Activated naive CD4-positive, alpha-beta T cell treated with anti-CD3 and anti-CD28 coated beads for 36 hours (primary cell): ENCODE measurements at regions of chr1 and their contacts with region 1.

Region 1: DNA sequence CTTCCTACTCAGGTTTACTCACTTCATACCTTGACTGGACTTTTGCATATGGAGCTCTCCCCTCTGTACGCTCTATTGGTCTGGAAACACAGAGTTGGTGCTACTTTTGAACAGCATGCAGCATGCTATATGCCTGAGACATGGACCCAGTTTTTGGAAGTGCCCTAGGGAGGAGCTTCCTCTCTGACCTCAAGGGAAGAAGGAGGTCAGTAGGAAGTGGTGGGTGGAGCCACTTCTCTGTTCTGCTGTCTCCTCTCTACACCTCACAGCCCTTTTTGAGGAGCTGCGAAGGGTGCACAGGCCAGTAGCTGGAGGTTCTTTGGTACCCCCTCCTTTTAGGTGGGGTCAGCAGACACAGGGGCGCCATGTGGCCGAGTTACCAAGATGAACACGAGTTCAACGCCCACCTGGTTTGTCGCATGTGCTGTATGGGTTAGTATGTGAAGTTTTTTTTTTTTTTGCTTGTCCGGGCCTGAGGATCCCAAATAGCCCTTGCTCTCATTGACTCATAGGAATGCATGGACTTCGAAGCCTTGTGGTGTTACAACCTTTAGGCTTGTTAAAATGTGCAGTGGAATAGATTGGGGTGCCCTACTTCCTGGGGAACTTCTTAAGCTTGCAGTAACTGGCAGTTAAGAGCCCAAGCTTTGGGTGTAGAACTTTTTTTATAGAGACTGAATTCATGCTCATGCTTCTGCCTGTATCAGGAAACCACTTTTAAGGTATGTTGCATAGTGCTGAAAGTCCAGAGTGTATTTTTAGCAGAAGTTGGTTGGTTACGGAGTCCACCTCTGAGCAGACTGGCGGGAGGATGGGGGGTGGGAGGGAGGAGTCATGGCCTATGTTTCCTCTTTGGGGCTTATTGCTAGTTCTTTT is 10.7 kb downstream of the MACF1 start:
- DNase-seq: peak; percentile 64
- H3K4me3 Mint-ChIP-seq: peak overlapping the region; percentile 89
- H3K27ac Mint-ChIP-seq: peak overlapping the region; percentile 93
- H3K4me1 Mint-ChIP-seq: peaks cover 58% of the 10 kb centered on the region
- H3K27me3 Mint-ChIP-seq: no peaks in the 10 kb centered on the region

Region 2: GRCh38 chr1:39204441-39205081 is 10.7 kb before region 1 on chr1 and contains the start of gene MACF1:
- CTCF ChIA-PET with region 1: interaction called, 26 read pairs
- intact Hi-C with region 1: no loop called
- DNase-seq: peak; percentile 76
- H3K4me3 Mint-ChIP-seq: peak within 1 kb of the TSS; percentile 81
- H3K27ac Mint-ChIP-seq: peak within 1 kb of the TSS; percentile 98
- H3K4me1 Mint-ChIP-seq: peaks cover 55% of the 10 kb centered on the region
- H3K27me3 Mint-ChIP-seq: no peaks in the 10 kb centered on the region
- total RNA-seq, gene MACF1: 174 to 179 TPM

Region 3: DNA sequence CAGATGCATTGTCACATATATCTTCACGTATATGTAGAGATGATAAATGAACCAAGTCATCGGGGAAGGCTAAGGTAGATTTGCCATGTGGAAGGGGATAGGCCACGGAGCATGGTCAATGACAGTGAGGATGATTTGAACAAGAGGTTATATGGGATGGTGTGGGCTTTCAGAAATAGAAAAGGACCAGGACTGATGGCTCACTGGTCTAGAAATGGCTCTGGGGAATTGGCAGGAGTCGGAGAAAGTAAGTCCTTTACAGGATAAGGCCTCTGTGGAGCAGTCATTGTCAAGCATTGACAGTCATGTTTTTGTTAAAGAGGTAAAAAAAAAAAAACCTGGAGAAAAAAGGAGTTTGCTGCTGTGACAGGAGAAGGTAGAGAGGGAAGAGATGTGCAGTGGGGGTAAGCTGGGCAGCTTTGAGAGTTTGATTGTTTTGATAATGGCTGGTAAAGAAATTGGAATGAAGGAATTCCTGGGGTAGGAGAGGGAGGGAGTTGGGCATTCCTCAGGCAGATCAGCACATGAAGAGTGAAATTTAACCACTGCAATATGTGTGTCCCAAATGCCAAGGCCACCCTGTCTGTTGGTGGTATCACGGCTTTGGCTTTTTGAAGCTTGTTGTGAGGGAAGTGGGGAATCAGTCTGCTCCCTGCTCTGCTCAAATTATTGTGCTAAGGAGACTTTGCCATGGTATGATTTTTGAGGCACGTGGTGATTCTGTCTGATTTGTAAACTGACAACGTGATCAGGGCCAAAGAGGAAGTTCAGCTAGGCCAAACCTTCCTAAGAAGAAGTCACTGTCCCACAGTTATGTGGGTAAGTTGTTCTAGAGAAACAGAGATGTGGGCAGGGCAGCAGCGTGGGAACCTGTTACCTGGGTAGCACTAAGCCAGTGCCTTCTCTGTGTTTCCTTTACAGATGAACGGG is 15.3 kb after region 1 on chr1:
- CTCF ChIA-PET with region 1: interaction called, 8 read pairs
- intact Hi-C with region 1: loop called (anchors 2 kb)
- DNase-seq: peak; percentile 29
- H3K4me3 Mint-ChIP-seq: peak overlapping the region; percentile 63
- H3K27ac Mint-ChIP-seq: peak overlapping the region; percentile 16
- H3K4me1 Mint-ChIP-seq: peaks cover 59% of the 10 kb centered on the region
- H3K27me3 Mint-ChIP-seq: no peaks in the 10 kb centered on the region